Activated T-helper 2 cell treated with anti-CD3 and anti-CD28 coated beads, Interferon-gamma antibody, Interleukin-2, Interleukin-4, amounts not matched to agents 10 μg/mL and 5 μg/mL and 100 μg/mL, durations not matched to agents 14 hours and 24 hours and 36 hours (primary cell): ENCODE measurements at regions of chr5 and their contacts with region 1.

Region 1: GRCh38 chr5:103232393-103232999 is 26.1 kb upstream of the MACIR start:
- DNase-seq: no peak
- H3K4me3 Mint-ChIP-seq: no peak overlapping the region
- H3K27ac Mint-ChIP-seq: no peak overlapping the region
- H3K4me1 Mint-ChIP-seq: no peaks in the 10 kb centered on the region
- H3K27me3 Mint-ChIP-seq: peaks cover 36% of the 10 kb centered on the region

Region 2: GRCh38 chr5:102937916-102938315 is 294.6 kb before region 1 on chr5:
- intact Hi-C with region 1: no loop called
- DNase-seq: no peak
- H3K4me3 Mint-ChIP-seq: no peak overlapping the region
- H3K27ac Mint-ChIP-seq: no peak overlapping the region
- H3K4me1 Mint-ChIP-seq: peaks cover 3% of the 10 kb centered on the region
- H3K27me3 Mint-ChIP-seq: no peaks in the 10 kb centered on the region

Region 3: DNA sequence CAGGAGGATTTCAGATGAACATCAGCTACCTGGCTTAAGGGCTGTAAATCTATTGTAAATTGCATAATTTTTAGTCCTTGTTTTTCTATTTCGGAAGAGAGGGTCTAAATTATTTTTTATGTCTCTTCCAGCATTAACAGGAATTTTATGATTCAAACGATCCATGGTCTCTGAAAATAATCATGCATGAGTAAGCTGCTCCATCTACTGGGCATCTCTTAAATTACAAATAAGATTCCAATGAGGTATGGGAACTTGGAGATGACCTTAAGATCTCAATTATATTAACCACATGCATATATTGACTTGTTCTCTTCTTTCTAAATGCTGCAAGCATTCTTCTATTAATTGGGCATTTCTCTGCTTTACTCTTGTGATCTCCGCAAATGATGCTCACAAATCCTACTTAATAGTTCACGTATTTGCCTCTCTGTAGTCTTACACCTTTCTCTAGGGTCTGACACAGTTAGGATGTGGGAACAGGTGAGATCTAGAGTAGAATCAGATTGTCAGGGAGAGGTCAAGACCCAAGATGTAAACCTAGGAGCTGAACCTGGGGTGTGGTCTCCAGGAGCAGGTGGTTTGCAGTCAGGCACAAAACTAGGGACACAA is 243.2 kb after region 1 on chr5:
- intact Hi-C with region 1: loop called (anchors 1 kb)
- DNase-seq: no peak
- H3K4me3 Mint-ChIP-seq: no peak overlapping the region
- H3K27ac Mint-ChIP-seq: no peak overlapping the region
- H3K4me1 Mint-ChIP-seq: no peaks in the 10 kb centered on the region
- H3K27me3 Mint-ChIP-seq: peaks cover 14% of the 10 kb centered on the region

Region 4: GRCh38 chr5:103800743-103801495 is 568.4 kb after region 1 on chr5:
- intact Hi-C with region 1: no loop called
- DNase-seq: no peak
- H3K4me3 Mint-ChIP-seq: no peak overlapping the region
- H3K27ac Mint-ChIP-seq: no peak overlapping the region
- H3K4me1 Mint-ChIP-seq: no peaks in the 10 kb centered on the region
- H3K27me3 Mint-ChIP-seq: no peaks in the 10 kb centered on the region